ENCODE measurements at regions of chr22 and their contacts with region 1.

Region 1: GRCh38 chr22:48188231-48188721 is 1425.8 kb downstream of the TBC1D22A start:
- DNase-seq: peak; percentile 48 to 62
- ATAC-seq: peak; percentile 57 to 74 (median 64)
- H3K4me3 ChIP-seq: no peak overlapping the region
- H3K4me3 Mint-ChIP-seq: no peak overlapping the region
- H3K27ac ChIP-seq: no peak overlapping the region
- H3K27ac Mint-ChIP-seq: peak overlapping the region in 1 of 2 donors; percentile 50
- H3K4me1 ChIP-seq: peaks cover 29% of the 10 kb centered on the region
- H3K4me1 Mint-ChIP-seq: peaks cover 43 to 48% of the 10 kb centered on the region in 2 donors
- H3K27me3 ChIP-seq: no peaks in the 10 kb centered on the region
- H3K27me3 Mint-ChIP-seq: peaks cover 29 to 40% of the 10 kb centered on the region in 2 donors
- CTCF ChIP-seq: no peak

Region 2: GRCh38 chr22:48241658-48242057 is 53.4 kb after region 1 on chr22:
- intact Hi-C with region 1: loop called (anchors 5 kb)
- DNase-seq: peak in 1 of 2 donors; percentile 37
- ATAC-seq: peak; percentile 7 to 60 (median 52)
- H3K4me3 ChIP-seq: no peak overlapping the region
- H3K4me3 Mint-ChIP-seq: peak overlapping the region; percentile 52
- H3K27ac ChIP-seq: no peak overlapping the region
- H3K27ac Mint-ChIP-seq: no peak overlapping the region
- H3K4me1 ChIP-seq: peaks cover 79% of the 10 kb centered on the region
- H3K4me1 Mint-ChIP-seq: peaks cover 69 to 72% of the 10 kb centered on the region in 2 donors
- H3K27me3 ChIP-seq: peaks cover 13% of the 10 kb centered on the region
- H3K27me3 Mint-ChIP-seq: peaks cover 25 to 38% of the 10 kb centered on the region in 2 donors
- CTCF ChIP-seq: no peak

Measured in natural killer cell (primary cell).